Naive thymus-derived CD4-positive, alpha-beta T cell (primary cell): ENCODE measurements at regions of chr12 and their contacts with region 1.

Region 1: GRCh38 chr12:67592216-67593011 is 56.1 kb upstream of the DYRK2 start:
- DNase-seq: peak in 5 of 9 donors; percentile 20 to 40 (median 33)
- ATAC-seq: no peak
- H3K4me3 ChIP-seq: no peak overlapping the region
- H3K4me3 Mint-ChIP-seq: peak overlapping the region; percentile 6 to 84 (median 46)
- H3K27ac ChIP-seq: no peak overlapping the region
- H3K27ac Mint-ChIP-seq: peak overlapping the region; percentile 79 to 94 (median 86)
- H3K4me1 ChIP-seq: peaks cover 37 to 55% of the 10 kb centered on the region in 2 donors
- H3K4me1 Mint-ChIP-seq: peaks cover 40 to 79% (median 58%) of the 10 kb centered on the region in 7 donors
- H3K27me3 ChIP-seq: no peaks in the 10 kb centered on the region
- H3K27me3 Mint-ChIP-seq: no peaks in the 10 kb centered on the region

Region 2: DNA sequence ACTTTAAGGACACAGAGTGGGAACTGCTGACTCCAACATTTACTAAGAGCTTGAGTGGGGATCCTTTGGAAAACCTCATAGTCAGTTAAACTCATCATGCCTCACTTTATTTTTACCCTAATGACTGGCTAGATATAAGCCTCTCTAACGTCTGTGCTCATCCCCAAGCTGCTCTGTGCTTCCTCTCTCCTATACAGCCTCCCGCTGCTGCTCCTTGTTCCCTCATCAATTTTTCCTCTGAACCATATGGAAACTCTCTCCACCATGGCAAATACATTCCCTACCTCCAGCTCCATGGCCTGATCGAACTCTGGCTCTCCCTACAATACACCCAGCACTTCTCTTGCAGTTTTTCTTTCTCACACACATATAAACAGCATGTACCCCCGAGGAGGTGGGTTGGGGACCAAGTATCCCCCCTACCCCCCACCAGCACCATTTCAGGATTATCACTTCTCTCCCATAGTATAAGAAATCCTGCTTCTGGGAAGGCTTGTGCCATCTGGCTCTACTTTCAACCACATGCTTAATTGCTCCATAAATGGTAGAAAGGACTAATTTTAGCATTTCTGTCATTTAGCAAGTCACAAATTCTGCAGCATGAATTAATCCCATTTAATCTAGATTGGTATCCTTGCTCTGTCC is 16.9 kb after region 1 on chr12:
- CTCF ChIA-PET with region 1: no interaction called
- POLR2A ChIA-PET with region 1: interaction called, 33 read pairs
- intact Hi-C with region 1: loop called in 1 of 2 experiments (anchors 1 kb)
- DNase-seq: no peak
- ATAC-seq: no peak
- H3K4me3 ChIP-seq: no peak overlapping the region
- H3K4me3 Mint-ChIP-seq: no peak overlapping the region
- H3K27ac ChIP-seq: no peak overlapping the region
- H3K27ac Mint-ChIP-seq: peak overlapping the region in 2 of 9 donors; percentile 25 to 60
- H3K4me1 ChIP-seq: no peaks in the 10 kb centered on the region
- H3K4me1 Mint-ChIP-seq: peaks cover 0 to 23% (median 13%) of the 10 kb centered on the region in 7 donors
- H3K27me3 ChIP-seq: no peaks in the 10 kb centered on the region
- H3K27me3 Mint-ChIP-seq: peaks cover 0 to 20% (median 0%) of the 10 kb centered on the region in 5 donors

Region 3: GRCh38 chr12:67698672-67699581 is 106.5 kb after region 1 on chr12:
- CTCF ChIA-PET with region 1: no interaction called
- POLR2A ChIA-PET with region 1: no interaction called
- intact Hi-C with region 1: loop called in 1 of 2 experiments (anchors 2 kb)
- DNase-seq: peak in 8 of 9 donors; percentile 26 to 55 (median 44)
- ATAC-seq: peak; percentile 82
- H3K4me3 ChIP-seq: peak overlapping the region; percentile 39
- H3K4me3 Mint-ChIP-seq: peak overlapping the region; percentile 71 to 86 (median 82)
- H3K27ac ChIP-seq: peak overlapping the region; percentile 62
- H3K27ac Mint-ChIP-seq: peak overlapping the region; percentile 58 to 91 (median 73)
- H3K4me1 ChIP-seq: peaks cover 20 to 24% of the 10 kb centered on the region in 2 donors
- H3K4me1 Mint-ChIP-seq: peaks cover 28 to 74% (median 60%) of the 10 kb centered on the region in 7 donors
- H3K27me3 ChIP-seq: no peaks in the 10 kb centered on the region
- H3K27me3 Mint-ChIP-seq: peaks cover 0 to 58% (median 0%) of the 10 kb centered on the region in 5 donors

Region 4: DNA sequence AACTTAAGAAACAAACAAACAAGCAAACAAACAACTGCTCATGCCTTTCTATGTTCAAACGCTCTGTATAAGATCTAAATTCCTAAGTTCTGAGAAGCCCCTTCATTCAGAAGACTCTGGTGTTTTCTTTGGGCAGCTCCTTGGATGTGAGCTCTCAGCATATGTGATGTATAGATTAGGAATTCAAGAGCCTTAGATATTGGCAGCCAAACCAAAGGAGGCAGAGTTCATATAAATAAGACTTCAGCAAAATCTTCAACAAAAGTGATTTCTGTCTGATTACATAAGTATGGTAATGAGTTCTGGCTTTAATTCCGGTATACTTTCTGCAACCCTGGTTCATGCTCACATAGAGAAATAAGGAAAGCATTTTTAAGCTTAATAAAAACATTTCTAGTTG is 201.7 kb after region 1 on chr12:
- CTCF ChIA-PET with region 1: no interaction called
- POLR2A ChIA-PET with region 1: no interaction called
- intact Hi-C with region 1: no loop called
- DNase-seq: no peak
- ATAC-seq: no peak
- H3K4me3 ChIP-seq: no peak overlapping the region
- H3K4me3 Mint-ChIP-seq: no peak overlapping the region
- H3K27ac ChIP-seq: no peak overlapping the region
- H3K27ac Mint-ChIP-seq: no peak overlapping the region
- H3K4me1 ChIP-seq: no peaks in the 10 kb centered on the region
- H3K4me1 Mint-ChIP-seq: peaks cover 2 to 11% (median 4%) of the 10 kb centered on the region in 7 donors
- H3K27me3 ChIP-seq: no peaks in the 10 kb centered on the region
- H3K27me3 Mint-ChIP-seq: peaks cover 0 to 11% (median 6%) of the 10 kb centered on the region in 5 donors

Region 5: DNA sequence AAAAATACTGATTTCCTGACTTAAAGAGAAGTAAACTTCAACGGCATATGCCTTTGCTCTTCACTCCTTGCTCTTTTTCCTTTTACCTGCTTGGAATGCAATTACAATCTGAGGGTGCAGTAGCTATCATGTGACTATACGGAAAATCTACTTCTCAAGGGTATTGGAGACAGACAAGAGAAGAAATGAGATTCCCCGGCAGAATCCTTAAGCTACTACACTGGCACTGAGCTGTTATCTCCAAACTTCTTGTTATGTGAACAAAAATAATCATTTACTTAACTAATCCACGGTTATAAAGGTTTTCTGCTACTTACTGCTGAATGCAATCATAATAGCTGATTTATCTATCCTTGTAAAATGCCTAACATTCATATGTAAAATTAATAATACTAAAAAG is 278.8 kb after region 1 on chr12:
- CTCF ChIA-PET with region 1: no interaction called
- POLR2A ChIA-PET with region 1: no interaction called
- intact Hi-C with region 1: no loop called
- DNase-seq: no peak
- ATAC-seq: no peak
- H3K4me3 ChIP-seq: no peak overlapping the region
- H3K4me3 Mint-ChIP-seq: no peak overlapping the region
- H3K27ac ChIP-seq: no peak overlapping the region
- H3K27ac Mint-ChIP-seq: no peak overlapping the region
- H3K4me1 ChIP-seq: no peaks in the 10 kb centered on the region
- H3K4me1 Mint-ChIP-seq: peaks cover 0 to 5% (median 0%) of the 10 kb centered on the region in 7 donors
- H3K27me3 ChIP-seq: no peaks in the 10 kb centered on the region
- H3K27me3 Mint-ChIP-seq: peaks cover 0 to 5% (median 0%) of the 10 kb centered on the region in 5 donors